Activated T-helper 2 cell treated with anti-CD3 and anti-CD28 coated beads, Interferon-gamma antibody, Interleukin-2, Interleukin-4, amounts not matched to agents 10 μg/mL and 5 μg/mL and 100 μg/mL, durations not matched to agents 14 hours and 24 hours and 36 hours (primary cell): ENCODE measurements at regions of chr2 and their contacts with region 1.

Region 1: GRCh38 chr2:213251618-213252017 is 32.6 kb upstream of the SPAG16 start:
- DNase-seq: no peak
- H3K4me3 Mint-ChIP-seq: no peak overlapping the region
- H3K27ac Mint-ChIP-seq: no peak overlapping the region
- H3K4me1 Mint-ChIP-seq: peaks cover 7% of the 10 kb centered on the region
- H3K27me3 Mint-ChIP-seq: peaks cover 23% of the 10 kb centered on the region

Region 2: DNA sequence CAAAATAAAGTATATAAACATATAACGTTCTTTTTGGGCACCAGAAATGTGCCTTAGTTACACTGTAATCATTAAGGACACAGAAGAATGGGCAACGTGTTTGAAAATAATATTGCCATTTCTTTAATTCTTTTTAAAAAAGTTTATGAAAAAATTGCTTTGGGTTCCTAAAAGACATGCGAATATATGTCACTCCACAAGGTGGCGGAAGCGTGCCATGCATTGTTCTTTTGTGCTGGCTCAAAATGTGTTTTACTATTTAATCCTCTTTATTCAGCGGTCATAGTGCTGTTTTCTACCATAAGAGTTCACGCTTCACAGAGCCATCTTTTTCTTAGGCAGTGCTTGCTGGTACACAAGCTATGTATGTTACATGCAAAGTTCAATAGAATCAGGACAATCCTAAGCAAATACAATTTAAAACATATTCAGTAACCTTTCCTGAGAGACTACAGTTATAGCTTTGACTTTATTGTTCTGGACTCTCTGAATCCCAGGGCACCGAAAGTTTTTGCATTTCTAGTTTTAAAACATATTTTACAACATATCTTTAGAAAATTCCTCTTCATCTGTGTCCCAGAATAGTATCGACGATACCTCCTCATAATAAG is 565.2 kb before region 1 on chr2:
- intact Hi-C with region 1: loop called (anchors 2 kb)
- DNase-seq: peak; percentile 17
- H3K4me3 Mint-ChIP-seq: no peak overlapping the region
- H3K27ac Mint-ChIP-seq: no peak overlapping the region
- H3K4me1 Mint-ChIP-seq: no peaks in the 10 kb centered on the region
- H3K27me3 Mint-ChIP-seq: peaks cover 4% of the 10 kb centered on the region

Region 3: GRCh38 chr2:212777020-212777491 is 474.6 kb before region 1 on chr2:
- intact Hi-C with region 1: loop called (anchors 10 kb)
- DNase-seq: no peak
- H3K4me3 Mint-ChIP-seq: no peak overlapping the region
- H3K27ac Mint-ChIP-seq: no peak overlapping the region
- H3K4me1 Mint-ChIP-seq: peaks cover 6% of the 10 kb centered on the region
- H3K27me3 Mint-ChIP-seq: no peaks in the 10 kb centered on the region

Region 4: DNA sequence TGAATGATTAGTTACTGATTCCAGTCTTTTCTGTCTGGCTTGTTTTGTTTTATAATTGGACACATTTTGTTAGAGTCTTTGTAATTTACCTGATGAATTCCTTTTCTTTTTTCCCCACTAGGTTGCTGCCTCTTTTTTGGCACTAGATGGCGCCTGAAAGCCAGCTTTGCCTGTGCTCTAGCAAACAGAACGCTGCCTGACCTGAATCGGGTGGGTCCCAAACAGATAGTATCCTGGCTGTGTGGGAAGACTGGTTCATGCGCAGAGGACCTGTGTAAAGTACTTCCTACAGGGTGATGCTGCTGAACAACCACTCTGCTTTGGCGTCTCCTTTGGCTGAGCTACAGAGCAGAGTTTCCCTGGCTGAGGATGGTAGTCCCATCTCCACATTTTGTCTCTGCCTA is 388.4 kb before region 1 on chr2:
- intact Hi-C with region 1: loop called (anchors 5 kb)
- DNase-seq: peak; percentile 12
- H3K4me3 Mint-ChIP-seq: no peak overlapping the region
- H3K27ac Mint-ChIP-seq: no peak overlapping the region
- H3K4me1 Mint-ChIP-seq: peaks cover 3% of the 10 kb centered on the region
- H3K27me3 Mint-ChIP-seq: no peaks in the 10 kb centered on the region

Region 5: GRCh38 chr2:213284105-213285090 is 32.8 kb after region 1 on chr2 and contains the start of gene SPAG16:
- intact Hi-C with region 1: loop called (anchors 2 kb)
- DNase-seq: peak; percentile 97
- H3K4me3 Mint-ChIP-seq: peak within 1 kb of the TSS; percentile 90
- H3K27ac Mint-ChIP-seq: peak within 1 kb of the TSS; percentile 84
- H3K4me1 Mint-ChIP-seq: peaks cover 26% of the 10 kb centered on the region
- H3K27me3 Mint-ChIP-seq: peaks cover 4% of the 10 kb centered on the region
- total RNA-seq, gene SPAG16: 7.5 and 8.0 TPM in 2 replicates

Region 6: GRCh38 chr2:213934560-213934959 is 682.9 kb after region 1 on chr2:
- intact Hi-C with region 1: loop called (anchors 2 kb)
- DNase-seq: no peak
- H3K4me3 Mint-ChIP-seq: no peak overlapping the region
- H3K27ac Mint-ChIP-seq: no peak overlapping the region
- H3K4me1 Mint-ChIP-seq: no peaks in the 10 kb centered on the region
- H3K27me3 Mint-ChIP-seq: no peaks in the 10 kb centered on the region